ENCODE measurements at regions of chr20 and their contacts with region 1.

Region 1: GRCh38 chr20:43736588-43737158 is 9.9 kb upstream of the GTSF1L start:
- DNase-seq: peak in 3 of 9 donors; percentile 6 to 34 (median 17)
- ATAC-seq: peak; percentile 46
- H3K4me3 ChIP-seq: no peak overlapping the region
- H3K4me3 Mint-ChIP-seq: no peak overlapping the region
- H3K27ac ChIP-seq: no peak overlapping the region
- H3K27ac Mint-ChIP-seq: peak overlapping the region in 2 of 9 donors; percentile 43 to 47
- H3K4me1 ChIP-seq: peaks cover 0 to 15% of the 10 kb centered on the region in 2 donors
- H3K4me1 Mint-ChIP-seq: peaks cover 5 to 44% (median 23%) of the 10 kb centered on the region in 7 donors
- H3K27me3 ChIP-seq: no peaks in the 10 kb centered on the region
- H3K27me3 Mint-ChIP-seq: peaks cover 0 to 8% (median 0%) of the 10 kb centered on the region in 5 donors

Region 2: GRCh38 chr20:43721429-43722152 is 15.1 kb before region 1 on chr20:
- CTCF ChIA-PET with region 1: no interaction called
- POLR2A ChIA-PET with region 1: interaction called, 15 read pairs
- intact Hi-C with region 1: no loop called
- DNase-seq: no peak
- ATAC-seq: no peak
- H3K4me3 ChIP-seq: peak overlapping the region; percentile 62
- H3K4me3 Mint-ChIP-seq: peak overlapping the region; percentile 62 to 92 (median 79)
- H3K27ac ChIP-seq: peak overlapping the region; percentile 75
- H3K27ac Mint-ChIP-seq: peak overlapping the region; percentile 65 to 95 (median 88)
- H3K4me1 ChIP-seq: peaks cover 0 to 53% of the 10 kb centered on the region in 2 donors
- H3K4me1 Mint-ChIP-seq: peaks cover 13 to 95% (median 70%) of the 10 kb centered on the region in 7 donors
- H3K27me3 ChIP-seq: no peaks in the 10 kb centered on the region
- H3K27me3 Mint-ChIP-seq: no peaks in the 10 kb centered on the region

Region 3: DNA sequence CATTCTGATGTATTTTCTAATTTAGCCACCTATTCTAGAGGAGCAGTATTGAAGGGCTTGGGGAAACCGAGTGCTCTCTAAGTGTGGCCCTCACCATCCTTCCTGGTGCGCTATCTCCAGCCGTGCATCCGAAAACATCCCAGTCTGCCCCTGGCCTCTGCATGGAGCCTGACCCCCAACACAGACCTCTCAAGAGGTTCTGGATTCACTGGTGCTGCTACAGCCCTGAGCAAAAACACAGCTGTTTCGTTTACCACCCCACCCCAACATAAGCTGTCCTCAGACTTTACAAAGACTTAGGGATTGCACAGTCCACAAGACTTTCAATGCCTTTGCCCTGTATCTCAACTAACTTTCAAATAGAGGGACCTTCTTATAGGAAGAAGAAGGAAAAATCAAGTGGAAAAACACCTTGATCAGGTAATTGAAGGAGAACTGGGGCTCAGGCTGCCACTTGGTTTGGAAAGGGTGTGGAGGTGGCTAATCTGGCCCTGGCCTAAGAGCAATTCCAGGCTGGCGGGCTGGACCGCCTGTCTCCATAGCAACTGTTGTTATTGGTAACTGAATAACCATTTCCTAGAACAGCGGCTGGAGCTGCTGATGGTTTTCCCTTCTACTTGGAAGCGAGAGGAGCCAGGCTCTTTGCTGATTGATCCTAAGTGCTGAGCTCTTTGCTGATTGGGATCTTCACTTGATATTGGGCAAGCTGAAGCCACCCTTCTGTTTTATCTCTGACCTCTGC is 87.8 kb after region 1 on chr20:
- CTCF ChIA-PET with region 1: no interaction called
- POLR2A ChIA-PET with region 1: no interaction called
- intact Hi-C with region 1: no loop called
- DNase-seq: no peak
- ATAC-seq: no peak
- H3K4me3 ChIP-seq: no peak overlapping the region
- H3K4me3 Mint-ChIP-seq: no peak overlapping the region
- H3K27ac ChIP-seq: no peak overlapping the region
- H3K27ac Mint-ChIP-seq: no peak overlapping the region
- H3K4me1 ChIP-seq: no peaks in the 10 kb centered on the region
- H3K4me1 Mint-ChIP-seq: no peaks in the 10 kb centered on the region
- H3K27me3 ChIP-seq: no peaks in the 10 kb centered on the region
- H3K27me3 Mint-ChIP-seq: peaks cover 0 to 5% (median 4%) of the 10 kb centered on the region in 5 donors

Measured in naive thymus-derived CD4-positive, alpha-beta T cell (primary cell).